ENCODE measurements at regions of chr3 and their contacts with region 1.

Region 1: DNA sequence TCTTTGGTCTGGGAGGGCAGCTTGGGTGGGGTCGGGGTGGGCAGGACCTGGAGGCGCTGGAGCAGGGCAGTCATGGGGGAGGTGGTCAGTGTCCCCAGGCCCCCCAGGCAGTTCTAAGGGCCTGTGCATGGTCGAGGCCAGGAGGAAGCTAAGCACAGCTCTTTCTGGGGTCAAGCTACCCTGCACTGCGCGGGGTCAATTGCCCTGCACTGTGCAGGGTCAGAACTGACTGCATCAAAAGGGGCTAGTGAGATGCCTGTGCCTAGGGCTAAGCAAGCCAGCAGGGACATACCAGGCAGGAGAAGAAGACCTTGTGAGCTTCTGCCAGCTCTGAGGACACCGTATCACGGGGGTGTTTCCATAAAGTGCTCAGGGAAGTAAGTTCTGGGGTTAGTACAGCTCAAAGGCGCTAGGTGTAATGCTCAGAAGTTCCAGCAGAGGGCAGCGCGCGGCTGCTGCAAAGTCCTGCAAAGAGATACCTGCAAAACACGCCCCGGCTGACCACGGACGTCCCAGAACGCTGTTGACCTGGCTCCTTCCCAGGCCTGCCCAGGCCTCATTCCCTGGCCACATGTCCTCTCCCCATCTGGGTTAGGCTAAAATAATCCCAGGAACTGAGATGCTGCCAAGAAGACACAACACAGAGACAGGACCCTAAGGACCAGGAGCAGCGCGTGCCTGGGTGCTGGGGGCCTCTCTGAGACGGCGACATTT is 18.8 kb upstream of the IQSEC1 start:
- DNase-seq: peak in 1 of 2 donors; percentile 90
- H3K4me3 ChIP-seq: no peak overlapping the region
- H3K27ac ChIP-seq: no peak overlapping the region
- H3K4me1 ChIP-seq: peaks cover 9% of the 10 kb centered on the region
- H3K27me3 ChIP-seq: no peaks in the 10 kb centered on the region
- CTCF ChIP-seq: peak; percentile 72 to 97 (median 93)
- POLR2A ChIP-seq: no peak

Region 2: GRCh38 chr3:13452490-13453335 is 360.7 kb after region 1 on chr3:
- intact Hi-C with region 1: loop called (anchors 5 kb)
- DNase-seq: no peak
- H3K4me3 ChIP-seq: peak overlapping the region; percentile 43 to 59
- H3K27ac ChIP-seq: peak overlapping the region; percentile 78
- H3K4me1 ChIP-seq: peaks cover 13% of the 10 kb centered on the region
- H3K27me3 ChIP-seq: no peaks in the 10 kb centered on the region
- CTCF ChIP-seq: peak; percentile 44 to 57 (median 44)
- POLR2A ChIP-seq: no peak

Measured in vagina (tissue), 2 donors.